ENCODE measurements at regions of chr10 and their contacts with region 1.

Region 1: GRCh38 chr10:95325863-95326262 is 35.1 kb upstream of the PDLIM1 start:
- DNase-seq: no peak
- ATAC-seq: no peak
- H3K4me3 ChIP-seq: no peak overlapping the region
- H3K27ac ChIP-seq: no peak overlapping the region
- H3K4me1 ChIP-seq: peaks cover 13% of the 10 kb centered on the region
- H3K27me3 ChIP-seq: no peaks in the 10 kb centered on the region
- CTCF ChIP-seq: no peak
- EP300 ChIP-seq: no peak
- POLR2A ChIP-seq: no peak
- RAD21 ChIP-seq: no peak

Region 2: GRCh38 chr10:95308389-95309302 is 17.2 kb before region 1 on chr10:
- CTCF ChIA-PET with region 1: no interaction called
- POLR2A ChIA-PET with region 1: no interaction called
- in situ Hi-C with region 1: no loop called
- intact Hi-C with region 1: loop called (anchors 1 kb)
- DNase-seq: peak; percentile 68
- ATAC-seq: peak; percentile 74
- H3K4me3 ChIP-seq: no peak overlapping the region
- H3K27ac ChIP-seq: no peak overlapping the region
- H3K4me1 ChIP-seq: peaks cover 58% of the 10 kb centered on the region
- H3K27me3 ChIP-seq: no peaks in the 10 kb centered on the region
- CTCF ChIP-seq: no peak
- EP300 ChIP-seq: no peak
- POLR2A ChIP-seq: no peak
- RAD21 ChIP-seq: no peak

Region 3: DNA sequence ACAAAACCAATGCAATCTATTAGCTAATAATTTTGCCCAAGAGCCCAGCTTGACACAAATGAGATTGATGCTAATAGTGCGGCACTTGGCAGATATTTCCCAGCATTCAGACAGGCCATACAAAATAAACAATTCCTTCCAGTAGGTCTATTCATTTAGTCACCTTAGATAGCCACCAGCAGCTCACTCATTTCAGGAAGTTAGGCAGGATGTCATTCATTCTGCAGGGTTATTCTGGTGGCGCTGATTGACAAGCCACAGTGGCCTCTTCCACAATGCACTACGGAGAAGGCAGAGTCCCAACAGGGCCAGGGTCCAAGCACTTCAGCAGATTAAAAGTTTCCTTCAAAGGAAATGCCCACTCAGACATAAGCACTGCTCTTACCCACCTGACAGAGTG is 1338.7 kb after region 1 on chr10:
- CTCF ChIA-PET with region 1: no interaction called
- POLR2A ChIA-PET with region 1: no interaction called
- in situ Hi-C with region 1: no loop called
- intact Hi-C with region 1: no loop called
- DNase-seq: no peak
- ATAC-seq: no peak; the same call in 2 of the 3 replicates
- H3K4me3 ChIP-seq: no peak overlapping the region
- H3K27ac ChIP-seq: no peak overlapping the region
- H3K4me1 ChIP-seq: peaks cover 32% of the 10 kb centered on the region
- H3K27me3 ChIP-seq: no peaks in the 10 kb centered on the region
- CTCF ChIP-seq: no peak
- EP300 ChIP-seq: no peak
- POLR2A ChIP-seq: no peak
- RAD21 ChIP-seq: no peak